HEK293 (cell line): ENCODE measurements at regions of chr14 and their contacts with region 1.

Region 1: DNA sequence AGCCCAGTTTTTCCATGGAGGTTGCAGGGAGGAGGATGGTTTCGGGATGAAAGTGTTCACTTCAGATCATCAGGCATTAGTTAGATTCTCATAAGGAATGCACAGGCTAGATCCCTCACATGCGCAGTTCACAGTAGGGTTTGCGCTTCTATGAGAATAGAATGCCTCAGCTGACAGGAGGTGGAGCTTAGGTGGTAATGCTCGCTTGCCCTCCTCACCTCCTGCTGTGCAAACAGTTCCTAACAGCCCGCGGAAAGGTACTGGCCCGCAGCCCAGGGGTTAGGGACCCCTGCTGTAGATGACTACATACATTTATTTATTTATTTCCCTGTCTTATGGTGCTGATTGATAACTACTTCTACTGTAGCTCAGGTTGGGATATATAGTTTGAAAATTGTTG is 93.2 kb downstream of the FBXO33 start:
- H3K4me3 ChIP-seq: no peak overlapping the region
- H3K27ac ChIP-seq: no peak overlapping the region
- H3K4me1 ChIP-seq: peaks cover 9% of the 10 kb centered on the region; the same call in 1 of the 2 replicates
- CTCF ChIP-seq: no peak

Region 2: GRCh38 chr14:39174560-39175444 is 164.2 kb before region 1 on chr14 and contains the start of gene PNN:
- CTCF ChIA-PET with region 1: no interaction called
- POLR2A ChIA-PET with region 1: interaction called, 10 read pairs
- H3K4me3 ChIP-seq: peak within 1 kb of the TSS; percentile 93
- H3K27ac ChIP-seq: peak within 1 kb of the TSS; percentile 92
- H3K4me1 ChIP-seq: no peaks in the 10 kb centered on the region
- CTCF ChIP-seq: no peak

Region 3: DNA sequence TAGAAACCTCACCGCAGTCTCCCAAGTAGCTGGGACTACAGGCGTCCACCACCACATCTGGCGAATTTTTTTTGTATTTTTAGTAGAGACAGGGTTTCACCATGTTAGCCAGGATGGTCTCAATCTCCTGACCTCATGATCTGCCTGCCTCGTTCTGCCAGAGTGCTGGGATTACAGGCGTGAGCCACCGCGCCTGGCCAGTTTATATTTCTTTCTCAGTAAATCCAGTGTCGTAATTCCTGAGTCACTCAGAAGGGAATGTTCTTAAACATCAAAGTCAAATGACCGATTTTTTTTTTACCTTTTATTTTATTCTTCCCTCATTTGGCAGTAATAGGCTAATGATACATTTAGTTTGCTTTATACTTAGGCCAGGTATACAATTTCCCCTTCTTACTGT is 12.7 kb after region 1 on chr14:
- CTCF ChIA-PET with region 1: no interaction called
- POLR2A ChIA-PET with region 1: no interaction called
- H3K4me3 ChIP-seq: no peak overlapping the region
- H3K27ac ChIP-seq: no peak overlapping the region
- H3K4me1 ChIP-seq: no peaks in the 10 kb centered on the region
- CTCF ChIP-seq: no peak